ENCODE measurements at regions of chr7 and their contacts with region 1.

Region 1: DNA sequence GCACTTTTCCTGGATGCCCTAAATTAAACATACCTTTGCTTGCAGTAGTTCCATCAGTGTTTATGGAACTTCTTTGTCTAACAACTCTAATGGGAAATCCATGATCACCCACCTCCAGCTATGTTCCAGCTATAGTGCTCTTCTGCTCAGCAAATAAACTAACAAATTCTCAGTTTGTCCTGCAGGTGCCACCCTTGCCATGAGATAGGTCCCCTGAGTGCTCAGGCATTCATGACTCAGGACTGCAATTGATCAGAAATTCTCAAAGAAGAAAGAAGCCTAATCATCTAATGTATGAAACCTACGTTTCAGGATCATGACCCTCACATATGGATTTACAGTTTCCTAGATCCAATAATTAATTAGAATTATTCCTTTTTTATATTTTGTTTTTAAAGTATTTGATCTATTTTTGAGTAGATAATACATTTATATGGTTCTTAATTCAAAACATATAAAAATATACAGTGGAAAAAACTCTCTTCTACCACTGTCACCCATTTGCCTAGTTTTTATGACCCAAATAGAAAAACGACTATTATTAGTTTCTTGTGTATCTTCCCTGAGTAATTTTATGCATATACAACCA is 48.7 kb upstream of the DYNC1I1 start:
- DNase-seq: peak; percentile 51
- ATAC-seq: peak; percentile 95
- H3K4me3 ChIP-seq: no peak overlapping the region
- H3K27ac ChIP-seq: no peak overlapping the region
- H3K4me1 ChIP-seq: no peaks in the 10 kb centered on the region
- H3K27me3 ChIP-seq: peaks cover 31% of the 10 kb centered on the region; the same call in 1 of the 2 replicates
- CTCF ChIP-seq: peak; percentile 48 to 63 (median 58); a peak in 5 of 6 replicates
- POLR2A ChIP-seq: no peak
- RAD21 ChIP-seq: peak; percentile 81

Region 2: DNA sequence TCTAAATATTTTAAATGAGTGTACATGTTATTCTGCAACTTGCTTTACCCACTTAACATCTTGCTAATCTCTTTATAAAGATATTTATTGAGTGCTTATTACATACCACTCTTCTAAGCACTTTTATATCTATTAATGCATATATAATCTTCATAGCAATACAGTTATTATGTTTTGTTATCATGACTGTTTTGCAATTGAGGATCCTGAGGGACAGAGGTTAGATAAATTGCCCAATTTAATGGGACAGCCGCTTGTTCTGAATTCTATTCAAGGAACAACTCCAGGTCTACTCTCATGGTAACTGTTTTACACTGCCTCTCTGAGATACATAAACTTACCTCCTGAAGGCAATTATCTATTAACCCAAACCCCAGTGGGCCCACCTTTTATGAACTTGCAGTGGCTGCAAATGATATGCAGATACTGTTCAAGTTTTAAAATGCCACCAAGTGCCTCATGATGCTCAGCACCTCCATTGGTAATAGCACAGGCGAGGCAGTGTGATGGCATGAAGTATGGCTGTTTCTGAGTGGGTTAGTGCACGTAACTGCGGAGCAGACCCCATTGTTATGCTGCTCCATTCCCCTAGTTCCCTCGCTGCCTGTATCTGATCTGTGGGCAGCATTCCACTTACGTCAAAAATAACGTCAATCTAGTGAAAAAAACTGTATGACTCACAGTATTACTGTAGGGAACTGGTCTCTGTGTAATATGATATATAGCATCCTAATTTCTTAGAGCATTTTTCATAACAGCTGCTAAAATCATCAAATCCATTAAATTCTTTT is 459.7 kb before region 1 on chr7:
- CTCF ChIA-PET with region 1: no interaction called
- POLR2A ChIA-PET with region 1: no interaction called
- RAD21 ChIA-PET with region 1: no interaction called
- intact Hi-C with region 1: no loop called
- DNase-seq: no peak
- ATAC-seq: no peak; the same call in 1 of the 2 replicates
- H3K4me3 ChIP-seq: no peak overlapping the region
- H3K27ac ChIP-seq: no peak overlapping the region
- H3K4me1 ChIP-seq: peaks cover 0 to 8% of the 10 kb centered on the region in 2 experiments; a peak in 1 of 4 replicates
- H3K27me3 ChIP-seq: no peaks in the 10 kb centered on the region
- CTCF ChIP-seq: no peak
- POLR2A ChIP-seq: no peak
- RAD21 ChIP-seq: no peak

Region 3: DNA sequence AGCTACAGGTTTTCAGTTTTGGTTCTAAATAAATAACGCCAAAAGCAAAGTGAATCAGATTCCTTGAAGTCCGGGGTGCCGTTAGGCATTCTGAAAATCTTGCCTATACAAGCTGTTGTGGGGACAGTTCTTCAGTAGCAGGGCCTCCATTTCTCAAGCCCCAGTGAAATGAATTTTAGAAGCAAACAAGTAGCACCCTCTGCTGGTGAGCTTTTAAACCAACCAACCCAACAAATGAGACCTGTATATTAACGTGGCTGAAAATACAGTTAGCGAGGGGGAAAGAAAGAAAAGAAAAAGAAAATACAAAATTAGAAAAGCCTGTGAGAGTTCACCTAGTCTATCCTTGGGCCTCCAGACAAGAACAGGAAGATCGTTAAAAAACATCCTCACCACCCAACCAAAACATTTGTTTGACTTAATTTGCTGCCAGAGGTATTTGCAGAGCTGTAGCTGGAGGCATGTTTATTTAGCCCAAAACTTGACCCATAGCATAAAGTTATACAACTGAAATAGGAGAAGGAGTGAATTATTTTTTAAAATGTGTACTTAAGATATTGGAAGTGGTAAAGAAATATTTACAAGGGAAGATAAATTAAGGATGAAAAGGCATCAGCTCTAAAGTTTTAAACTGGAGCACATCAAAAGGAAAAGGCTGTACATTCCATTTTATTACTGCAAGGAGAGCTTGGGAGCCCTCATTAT is 147.5 kb after region 1 on chr7:
- CTCF ChIA-PET with region 1: interaction called, 52 read pairs
- POLR2A ChIA-PET with region 1: interaction called, 4 read pairs
- RAD21 ChIA-PET with region 1: interaction called, 4 to 5 read pairs
- intact Hi-C with region 1: loop called (anchors 1 kb)
- DNase-seq: peak; percentile 29
- ATAC-seq: peak; percentile 73
- H3K4me3 ChIP-seq: no peak overlapping the region
- H3K27ac ChIP-seq: no peak overlapping the region
- H3K4me1 ChIP-seq: no peaks in the 10 kb centered on the region
- H3K27me3 ChIP-seq: peaks cover 10% of the 10 kb centered on the region
- CTCF ChIP-seq: peak; percentile 61 to 76 (median 66); a peak in 5 of 6 replicates
- POLR2A ChIP-seq: no peak
- RAD21 ChIP-seq: peak; percentile 73

Region 4: GRCh38 chr7:97179454-97180104 is 1455.9 kb after region 1 on chr7:
- CTCF ChIA-PET with region 1: no interaction called
- POLR2A ChIA-PET with region 1: no interaction called
- RAD21 ChIA-PET with region 1: no interaction called
- intact Hi-C with region 1: loop called (anchors 10 kb)
- DNase-seq: peak; percentile 29
- ATAC-seq: peak; percentile 64; the same call in 1 of the 2 replicates
- H3K4me3 ChIP-seq: no peak overlapping the region
- H3K27ac ChIP-seq: no peak overlapping the region
- H3K4me1 ChIP-seq: no peaks in the 10 kb centered on the region
- H3K27me3 ChIP-seq: no peaks in the 10 kb centered on the region
- CTCF ChIP-seq: peak; percentile 32 to 75 (median 73); a peak in 5 of 6 replicates
- POLR2A ChIP-seq: no peak
- RAD21 ChIP-seq: peak; percentile 57